ENCODE measurements at regions of chr9 and their contacts with region 1.

Region 1: DNA sequence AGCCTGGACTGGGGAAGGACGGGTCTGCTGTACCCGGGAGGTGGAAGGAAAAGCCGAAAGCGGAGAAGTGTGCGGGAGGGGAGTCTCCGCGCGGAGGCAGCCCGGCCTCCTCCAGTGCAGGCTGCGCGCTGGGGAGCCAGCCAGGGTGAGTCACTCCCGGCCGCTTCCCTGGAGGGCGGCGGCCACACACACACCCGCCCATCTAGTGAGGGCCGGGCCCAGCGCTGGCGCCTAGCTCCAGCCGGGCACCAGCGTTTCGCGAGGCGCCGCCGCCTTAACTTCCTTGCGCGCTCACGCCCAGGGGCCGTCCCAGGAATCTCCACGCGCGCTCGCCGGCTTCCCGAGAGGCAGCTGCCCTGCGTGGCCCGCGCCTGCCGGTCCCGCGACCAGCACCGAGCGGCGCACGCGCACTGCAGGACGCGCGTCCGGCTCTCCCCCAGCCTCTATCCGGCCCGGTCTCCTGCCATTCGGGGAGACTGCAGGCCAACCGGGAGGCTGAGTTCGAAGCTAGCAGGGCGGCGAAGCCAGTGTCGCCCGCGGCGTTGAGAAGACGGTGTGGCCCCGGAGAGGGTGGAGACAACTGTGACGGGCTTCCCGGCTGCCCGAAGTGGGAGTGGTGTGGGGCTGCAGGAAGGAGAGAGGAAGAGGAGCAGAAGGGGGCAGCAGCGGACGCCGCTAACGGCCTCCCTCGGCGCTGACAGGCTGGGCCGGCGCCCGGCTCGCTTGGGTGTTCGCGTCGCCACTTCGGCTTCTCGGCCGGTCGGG is at the start of gene JAK2:
- DNase-seq: peak; percentile 78 to 89
- H3K4me3 ChIP-seq: peak within 1 kb of the TSS; percentile 50 to 83 (median 68)
- H3K27ac ChIP-seq: peak within 1 kb of the TSS; percentile 44; the same call in 1 of the 2 replicates
- H3K4me1 ChIP-seq: peaks cover 0 to 3% (median 1%) of the 10 kb centered on the region in 4 experiments; a peak in 2 of 7 replicates
- H3K27me3 ChIP-seq: peaks cover 0 to 10% (median 4%) of the 10 kb centered on the region in 4 experiments; a peak in 3 of 7 replicates
- CTCF ChIP-seq: peak; percentile 43 to 61 (median 55)
- EP300 ChIP-seq: no peak
- POLR2A ChIP-seq: peak; percentile 43 to 70
- RAD21 ChIP-seq: peak; percentile 16 to 28; a peak in 2 of 4 replicates
- total RNA-seq, gene JAK2: 2.0 and 2.1 TPM in 2 replicates

Region 2: GRCh38 chr9:4792572-4793458 is 192.0 kb before region 1 on chr9 and contains the start of gene RCL1:
- CTCF ChIA-PET with region 1: interaction called, 6 read pairs
- POLR2A ChIA-PET with region 1: interaction called, 10 read pairs
- DNase-seq: peak; percentile 89 to 95
- H3K4me3 ChIP-seq: peak within 1 kb of the TSS; percentile 81 to 86 (median 84)
- H3K27ac ChIP-seq: peak within 1 kb of the TSS; percentile 76
- H3K4me1 ChIP-seq: peaks cover 0 to 13% (median 6%) of the 10 kb centered on the region in 4 experiments; a peak in 6 of 7 replicates
- H3K27me3 ChIP-seq: no peaks in the 10 kb centered on the region; a peak in 2 of 7 replicates
- CTCF ChIP-seq: no peak
- EP300 ChIP-seq: no peak; a peak in 1 of 3 replicates
- POLR2A ChIP-seq: peak; percentile 86 to 88
- RAD21 ChIP-seq: no peak
- total RNA-seq, gene RCL1: 29.5 and 29.7 TPM in 2 replicates

Region 3: DNA sequence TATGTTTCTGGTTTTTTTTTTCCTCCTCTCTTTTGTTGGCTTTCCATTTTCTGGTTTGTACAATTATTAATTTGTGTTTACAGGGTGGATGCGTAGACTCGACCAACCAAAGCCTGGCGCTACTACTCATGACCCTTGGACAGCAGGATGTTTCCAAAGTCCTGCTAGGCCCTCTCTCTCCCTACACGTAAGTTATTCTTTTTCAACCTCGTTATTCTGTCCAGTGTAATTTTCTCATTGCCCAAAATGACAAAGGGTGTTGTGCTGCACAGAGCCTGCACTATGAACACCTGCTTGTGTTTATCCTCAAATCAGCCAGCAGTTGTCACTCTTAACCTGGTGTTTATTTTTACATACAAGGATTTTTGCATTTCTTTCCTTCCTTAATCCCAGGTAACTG is 135.4 kb before region 1 on chr9:
- CTCF ChIA-PET with region 1: interaction called, 17 read pairs
- POLR2A ChIA-PET with region 1: no interaction called
- DNase-seq: no peak
- H3K4me3 ChIP-seq: no peak overlapping the region
- H3K27ac ChIP-seq: no peak overlapping the region
- H3K4me1 ChIP-seq: peaks cover 0 to 2% (median 0%) of the 10 kb centered on the region in 4 experiments; a peak in 2 of 7 replicates
- H3K27me3 ChIP-seq: no peaks in the 10 kb centered on the region
- CTCF ChIP-seq: no peak
- EP300 ChIP-seq: no peak
- POLR2A ChIP-seq: no peak
- RAD21 ChIP-seq: peak in 1 of 2 experiments; percentile 24; a peak in 1 of 4 replicates

Measured in H1 (cell line).